Naive thymus-derived CD4-positive, alpha-beta T cell (primary cell): ENCODE measurements at regions of chr9 and their contacts with region 1.

Region 1: GRCh38 chr9:89477811-89478630 is 19.9 kb downstream of the SEMA4D start:
- DNase-seq: peak in 8 of 9 donors; percentile 49 to 78 (median 66)
- ATAC-seq: peak; percentile 63
- H3K4me3 ChIP-seq: peak overlapping the region; percentile 49
- H3K4me3 Mint-ChIP-seq: peak overlapping the region; percentile 80 to 92 (median 87)
- H3K27ac ChIP-seq: peak overlapping the region; percentile 78
- H3K27ac Mint-ChIP-seq: peak overlapping the region; percentile 90 to 99 (median 95)
- H3K4me1 ChIP-seq: peaks cover 74 to 82% of the 10 kb centered on the region in 2 donors
- H3K4me1 Mint-ChIP-seq: peaks cover 76 to 96% (median 90%) of the 10 kb centered on the region in 7 donors
- H3K27me3 ChIP-seq: no peaks in the 10 kb centered on the region
- H3K27me3 Mint-ChIP-seq: no peaks in the 10 kb centered on the region

Region 2: DNA sequence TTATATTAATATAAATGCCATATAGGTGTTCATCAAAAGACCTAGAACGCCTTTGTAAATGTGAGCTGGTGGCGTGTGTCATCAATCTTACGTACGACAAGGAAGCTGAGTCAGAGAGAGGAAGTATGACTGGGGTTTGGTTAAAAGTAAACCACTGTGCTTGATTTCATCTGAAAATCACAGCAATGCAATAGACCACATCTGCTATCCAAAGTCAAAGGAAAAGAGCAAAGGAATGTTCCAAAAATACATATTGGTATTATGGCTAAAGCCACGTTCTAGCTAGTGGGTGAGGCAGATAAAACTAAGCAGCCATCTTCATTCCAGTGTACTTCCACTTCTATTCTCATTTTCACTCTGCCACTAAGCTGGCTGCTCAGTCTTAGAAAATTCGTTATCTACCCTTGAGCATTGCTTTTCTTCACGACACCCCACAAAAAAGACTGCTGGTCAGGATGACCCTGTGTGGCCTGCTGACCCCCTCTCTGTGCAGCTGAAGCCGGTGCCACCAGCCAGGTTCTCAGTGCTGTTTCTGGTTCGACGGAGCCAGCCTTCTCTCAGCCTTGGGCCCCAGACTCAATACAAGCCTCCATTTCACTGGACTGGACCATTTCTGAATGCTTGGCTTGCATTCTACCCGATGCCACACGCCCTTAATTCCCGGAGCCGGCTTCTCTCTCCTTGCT is 323.2 kb before region 1 on chr9:
- CTCF ChIA-PET with region 1: no interaction called
- POLR2A ChIA-PET with region 1: no interaction called
- intact Hi-C with region 1: no loop called
- DNase-seq: no peak
- ATAC-seq: peak; percentile 63
- H3K4me3 ChIP-seq: no peak overlapping the region
- H3K4me3 Mint-ChIP-seq: no peak overlapping the region
- H3K27ac ChIP-seq: no peak overlapping the region
- H3K27ac Mint-ChIP-seq: no peak overlapping the region
- H3K4me1 ChIP-seq: no peaks in the 10 kb centered on the region
- H3K4me1 Mint-ChIP-seq: peaks cover 0 to 10% (median 3%) of the 10 kb centered on the region in 7 donors
- H3K27me3 ChIP-seq: no peaks in the 10 kb centered on the region
- H3K27me3 Mint-ChIP-seq: peaks cover 28 to 64% (median 48%) of the 10 kb centered on the region in 5 donors

Region 3: GRCh38 chr9:89489548-89490530 is 11.8 kb after region 1 on chr9:
- CTCF ChIA-PET with region 1: no interaction called
- POLR2A ChIA-PET with region 1: interaction called, 37 read pairs
- intact Hi-C with region 1: loop called (anchors 1 kb)
- DNase-seq: peak in 8 of 9 donors; percentile 15 to 87 (median 78)
- ATAC-seq: peak; percentile 90
- H3K4me3 ChIP-seq: peak overlapping the region; percentile 22
- H3K4me3 Mint-ChIP-seq: peak overlapping the region; percentile 60 to 100 (median 88)
- H3K27ac ChIP-seq: peak overlapping the region; percentile 69
- H3K27ac Mint-ChIP-seq: peak overlapping the region; percentile 82 to 98 (median 89)
- H3K4me1 ChIP-seq: peaks cover 81 to 82% of the 10 kb centered on the region in 2 donors
- H3K4me1 Mint-ChIP-seq: peaks cover 78 to 100% (median 92%) of the 10 kb centered on the region in 7 donors
- H3K27me3 ChIP-seq: no peaks in the 10 kb centered on the region
- H3K27me3 Mint-ChIP-seq: no peaks in the 10 kb centered on the region